PC-9 (cell line): ENCODE measurements at regions of chr19 and their contacts with region 1.

Region 1: GRCh38 chr19:43687660-43687997 is 17.7 kb upstream of the PLAUR start:
- DNase-seq: peak in 1 of 2 experiments; percentile 39
- H3K4me3 ChIP-seq: no peak overlapping the region
- H3K27ac ChIP-seq: peak overlapping the region; percentile 31
- H3K4me1 ChIP-seq: peaks cover 23% of the 10 kb centered on the region
- H3K27me3 ChIP-seq: no peaks in the 10 kb centered on the region
- CTCF ChIP-seq: no peak

Region 2: DNA sequence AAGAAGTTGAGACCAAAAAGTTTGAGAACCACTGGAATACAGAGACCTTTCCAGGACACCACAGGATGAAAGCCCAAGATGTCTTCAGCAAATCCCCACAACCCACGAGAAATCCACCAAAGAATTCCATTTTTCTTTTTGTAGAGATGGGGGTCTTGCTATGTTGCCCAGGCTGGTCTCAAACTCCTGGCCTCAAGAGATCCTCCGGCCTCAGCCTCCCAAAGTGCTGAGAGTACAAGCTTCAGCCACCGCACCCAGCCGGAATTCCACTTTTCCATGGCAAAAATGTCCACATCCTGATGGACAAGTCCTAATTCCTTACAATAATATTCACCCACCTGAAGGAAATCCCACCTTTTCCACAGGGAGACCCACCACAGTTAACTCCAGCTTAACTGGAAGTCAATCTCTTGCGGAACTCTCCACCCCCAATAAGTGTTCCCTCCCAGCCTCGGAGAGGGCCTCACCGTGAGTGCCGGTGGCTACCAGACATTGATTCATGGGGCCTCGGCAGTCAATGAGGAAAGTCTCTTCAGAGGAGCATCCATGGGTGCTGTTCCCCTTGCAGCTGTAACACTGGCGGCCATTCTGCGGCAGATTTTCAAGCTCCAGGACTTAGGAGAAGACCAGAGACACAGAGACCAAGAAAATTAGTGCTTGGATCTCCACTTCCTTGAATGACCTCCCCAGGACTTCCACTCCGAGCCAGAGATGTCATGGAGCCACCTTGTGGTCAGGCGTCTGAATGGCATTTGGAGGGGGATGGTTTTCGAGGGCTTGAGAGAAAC is 35.7 kb before region 1 on chr19:
- CTCF ChIA-PET with region 1: no interaction called
- POLR2A ChIA-PET with region 1: no interaction called
- intact Hi-C with region 1: no loop called
- DNase-seq: peak; percentile 49 to 61
- H3K4me3 ChIP-seq: no peak overlapping the region
- H3K27ac ChIP-seq: no peak overlapping the region
- H3K4me1 ChIP-seq: no peaks in the 10 kb centered on the region
- H3K27me3 ChIP-seq: no peaks in the 10 kb centered on the region
- CTCF ChIP-seq: peak; percentile 81

Region 3: GRCh38 chr19:43700395-43701000 is 12.9 kb after region 1 on chr19:
- CTCF ChIA-PET with region 1: no interaction called
- POLR2A ChIA-PET with region 1: no interaction called
- intact Hi-C with region 1: loop called (anchors 1 kb)
- DNase-seq: peak in 1 of 2 experiments; percentile 61
- H3K4me3 ChIP-seq: peak overlapping the region; percentile 44; the same call in 1 of the 2 replicates
- H3K27ac ChIP-seq: peak overlapping the region; percentile 80
- H3K4me1 ChIP-seq: peaks cover 36% of the 10 kb centered on the region
- H3K27me3 ChIP-seq: no peaks in the 10 kb centered on the region
- CTCF ChIP-seq: no peak

Region 4: DNA sequence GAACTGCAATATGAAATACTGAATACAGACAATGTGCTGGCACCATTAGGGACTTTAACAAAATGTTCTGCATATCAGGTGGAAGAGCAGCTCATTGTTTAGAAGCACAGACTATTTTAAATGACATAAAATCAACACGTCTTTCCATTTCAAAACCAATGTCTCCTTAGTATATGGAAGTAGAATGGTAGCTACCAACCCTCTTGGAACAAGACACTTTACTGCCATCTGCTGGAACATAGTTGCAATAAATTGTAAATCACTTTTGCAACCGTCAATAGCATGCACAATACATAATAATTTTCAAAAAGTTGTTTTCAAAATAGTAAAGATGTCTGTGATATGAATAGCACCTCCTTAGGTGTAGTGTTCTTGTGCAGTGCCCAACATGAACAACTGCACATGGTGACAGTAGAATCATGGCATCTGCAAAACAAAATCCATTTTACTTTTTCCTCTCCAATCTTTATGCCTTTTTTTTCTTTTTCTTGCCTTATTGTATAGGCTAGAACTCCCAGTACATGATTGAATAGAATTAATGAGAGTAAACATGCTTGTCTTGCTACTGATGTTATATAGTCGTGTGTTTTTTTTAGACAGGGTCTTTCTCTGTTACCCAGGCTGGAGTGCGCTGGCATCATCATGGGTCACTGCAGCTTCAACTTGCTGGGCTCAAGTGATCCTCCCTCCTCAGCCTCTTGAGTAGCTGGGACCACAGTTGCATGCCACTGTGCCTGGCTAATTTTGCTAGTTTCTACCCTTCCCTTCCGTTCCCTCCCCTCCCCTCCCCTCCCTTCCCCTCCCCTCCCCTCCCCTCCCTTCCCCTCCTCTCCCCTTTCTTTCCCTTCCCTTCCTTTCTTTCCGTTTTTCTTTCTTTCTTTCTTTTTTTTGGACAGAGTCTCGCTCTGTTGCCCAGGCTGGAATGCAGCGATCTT is 122.4 kb after region 1 on chr19:
- CTCF ChIA-PET with region 1: no interaction called
- POLR2A ChIA-PET with region 1: no interaction called
- intact Hi-C with region 1: no loop called
- DNase-seq: peak in 1 of 2 experiments; percentile 66
- H3K4me3 ChIP-seq: no peak overlapping the region
- H3K27ac ChIP-seq: no peak overlapping the region
- H3K4me1 ChIP-seq: peaks cover 7% of the 10 kb centered on the region
- H3K27me3 ChIP-seq: no peaks in the 10 kb centered on the region
- CTCF ChIP-seq: peak; percentile 77